ENCODE measurements at regions of chr6 and their contacts with region 1.

Region 1: GRCh38 chr6:28355743-28356665 is 6.3 kb downstream of the ZKSCAN3 start:
- DNase-seq: peak; percentile 74
- ATAC-seq: peak; percentile 88
- H3K4me3 Mint-ChIP-seq: peak overlapping the region; percentile 73
- H3K27ac Mint-ChIP-seq: peak overlapping the region; percentile 97
- H3K4me1 Mint-ChIP-seq: peaks cover 27% of the 10 kb centered on the region
- H3K27me3 Mint-ChIP-seq: no peaks in the 10 kb centered on the region; the same call in 1 of the 2 replicates
- CTCF ChIP-seq: peak; percentile 78

Region 2: DNA sequence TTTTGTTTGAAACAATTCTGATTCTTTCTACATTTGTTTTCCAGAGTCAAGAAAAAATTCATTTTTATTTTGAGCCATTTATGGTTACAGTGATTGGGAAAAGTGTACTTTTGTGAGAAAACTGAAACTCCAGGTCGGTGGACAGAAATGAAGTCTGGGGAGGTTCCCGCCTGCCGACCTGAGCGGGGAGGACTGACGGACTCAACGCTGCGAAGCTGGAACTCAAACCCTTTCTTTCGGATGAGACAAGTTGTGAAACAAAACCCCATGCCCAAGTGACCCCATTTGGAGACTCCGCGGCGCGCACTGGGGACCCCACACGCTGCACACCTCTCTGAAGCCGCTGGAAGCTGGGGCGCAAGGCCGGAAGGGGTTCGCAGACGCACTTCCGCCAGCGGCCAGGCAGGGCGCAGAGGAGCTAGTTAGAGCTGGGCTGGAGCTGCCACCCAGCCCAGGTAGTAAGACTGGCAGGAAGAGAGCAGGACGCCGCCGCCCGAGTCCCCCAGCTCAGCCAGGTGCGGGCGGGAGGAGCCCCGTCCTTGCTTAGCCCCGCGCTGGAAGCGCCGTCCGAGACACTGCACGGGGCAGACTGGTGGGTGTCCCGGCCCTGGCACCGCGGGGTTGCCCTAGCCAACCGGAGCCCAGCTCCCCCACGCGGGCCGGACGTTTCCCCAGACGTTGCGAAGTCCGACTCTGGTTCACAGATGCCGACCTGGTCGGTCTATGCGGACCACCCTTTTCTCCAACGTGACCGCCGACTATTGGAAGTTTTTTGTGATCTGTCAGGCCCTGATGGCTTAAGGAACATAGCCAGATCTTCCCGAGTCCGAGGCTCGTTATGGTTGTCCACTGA is 251.4 kb before region 1 on chr6:
- CTCF ChIA-PET with region 1: interaction called, 21 read pairs
- POLR2A ChIA-PET with region 1: no interaction called
- DNase-seq: peak; percentile 92
- ATAC-seq: peak; percentile 99
- H3K4me3 Mint-ChIP-seq: peak overlapping the region; percentile 78
- H3K27ac Mint-ChIP-seq: peak overlapping the region; percentile 90; the same call in 1 of the 2 replicates
- H3K4me1 Mint-ChIP-seq: peaks cover 5% of the 10 kb centered on the region; the same call in 1 of the 2 replicates
- H3K27me3 Mint-ChIP-seq: peaks cover 58% of the 10 kb centered on the region
- CTCF ChIP-seq: no peak

Region 3: GRCh38 chr6:28161410-28162079 is 194.5 kb before region 1 on chr6:
- CTCF ChIA-PET with region 1: interaction called, 10 read pairs
- POLR2A ChIA-PET with region 1: interaction called, 4 read pairs
- DNase-seq: peak; percentile 93
- ATAC-seq: peak; percentile 99
- H3K4me3 Mint-ChIP-seq: peak overlapping the region; percentile 70
- H3K27ac Mint-ChIP-seq: no peak overlapping the region
- H3K4me1 Mint-ChIP-seq: peaks cover 10% of the 10 kb centered on the region
- H3K27me3 Mint-ChIP-seq: peaks cover 67% of the 10 kb centered on the region
- CTCF ChIP-seq: no peak

Region 4: DNA sequence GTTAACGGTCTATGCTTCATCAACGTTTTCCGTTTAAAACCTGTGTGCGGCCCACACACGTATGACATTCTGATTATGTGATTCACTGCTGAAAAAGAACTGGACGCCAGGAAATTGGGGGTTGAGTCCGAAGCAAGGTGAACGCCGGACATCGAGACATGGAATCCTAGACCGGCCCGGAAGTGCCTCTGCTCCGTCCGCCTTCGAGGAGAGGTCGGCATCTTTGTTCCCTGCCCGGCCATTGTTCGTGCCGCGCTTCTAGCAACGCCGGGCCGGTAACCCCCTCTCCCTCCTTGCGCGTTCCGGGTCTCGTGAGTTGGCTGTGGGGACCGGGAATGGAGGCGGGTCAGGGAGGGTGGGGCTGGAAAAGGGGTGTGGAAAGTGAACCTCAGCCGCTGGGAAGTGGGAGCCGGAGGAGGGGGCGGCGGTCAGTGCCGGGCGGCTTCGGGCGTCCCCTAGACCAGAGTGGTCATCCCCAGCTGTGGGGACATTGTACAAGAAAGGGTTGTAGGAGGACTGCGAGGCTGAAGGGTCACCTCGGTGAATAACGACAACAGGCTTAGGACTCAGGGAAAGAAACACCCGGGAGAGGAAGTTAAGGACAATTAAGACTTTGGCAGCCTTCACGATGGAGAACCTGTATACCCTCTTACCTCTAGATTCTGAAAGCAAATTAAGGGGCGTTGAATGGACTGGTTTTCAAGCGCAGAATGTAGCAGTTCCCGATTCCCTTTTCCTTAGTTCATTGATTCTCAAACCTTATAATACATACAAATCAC is 130.8 kb before region 1 on chr6 and contains the start of gene ZSCAN9:
- CTCF ChIA-PET with region 1: interaction called, 10 read pairs
- POLR2A ChIA-PET with region 1: no interaction called
- DNase-seq: peak; percentile 88
- ATAC-seq: peak; percentile 95
- H3K4me3 Mint-ChIP-seq: peak within 1 kb of the TSS; percentile 94
- H3K27ac Mint-ChIP-seq: peak within 1 kb of the TSS; percentile 53
- H3K4me1 Mint-ChIP-seq: peaks cover 10% of the 10 kb centered on the region
- H3K27me3 Mint-ChIP-seq: peaks cover 45% of the 10 kb centered on the region
- CTCF ChIP-seq: no peak
- total RNA-seq, gene ZSCAN9: 13.0 to 15.1 TPM (median 14.5 TPM) in 3 replicates

Region 5: GRCh38 chr6:28266962-28267694 is 88.9 kb before region 1 on chr6 and contains the start of gene ZSCAN26:
- CTCF ChIA-PET with region 1: interaction called, 34 read pairs
- POLR2A ChIA-PET with region 1: interaction called, 6 read pairs
- DNase-seq: peak; percentile 91
- ATAC-seq: peak; percentile 96
- H3K4me3 Mint-ChIP-seq: no peak within 1 kb of the TSS
- H3K27ac Mint-ChIP-seq: no peak within 1 kb of the TSS; the same call in 1 of the 2 replicates
- H3K4me1 Mint-ChIP-seq: no peaks in the 10 kb centered on the region
- H3K27me3 Mint-ChIP-seq: peaks cover 32% of the 10 kb centered on the region
- CTCF ChIP-seq: no peak
- total RNA-seq, gene ZSCAN26: 5.2 to 7.5 TPM (median 6.6 TPM) in 3 replicates

Region 6: DNA sequence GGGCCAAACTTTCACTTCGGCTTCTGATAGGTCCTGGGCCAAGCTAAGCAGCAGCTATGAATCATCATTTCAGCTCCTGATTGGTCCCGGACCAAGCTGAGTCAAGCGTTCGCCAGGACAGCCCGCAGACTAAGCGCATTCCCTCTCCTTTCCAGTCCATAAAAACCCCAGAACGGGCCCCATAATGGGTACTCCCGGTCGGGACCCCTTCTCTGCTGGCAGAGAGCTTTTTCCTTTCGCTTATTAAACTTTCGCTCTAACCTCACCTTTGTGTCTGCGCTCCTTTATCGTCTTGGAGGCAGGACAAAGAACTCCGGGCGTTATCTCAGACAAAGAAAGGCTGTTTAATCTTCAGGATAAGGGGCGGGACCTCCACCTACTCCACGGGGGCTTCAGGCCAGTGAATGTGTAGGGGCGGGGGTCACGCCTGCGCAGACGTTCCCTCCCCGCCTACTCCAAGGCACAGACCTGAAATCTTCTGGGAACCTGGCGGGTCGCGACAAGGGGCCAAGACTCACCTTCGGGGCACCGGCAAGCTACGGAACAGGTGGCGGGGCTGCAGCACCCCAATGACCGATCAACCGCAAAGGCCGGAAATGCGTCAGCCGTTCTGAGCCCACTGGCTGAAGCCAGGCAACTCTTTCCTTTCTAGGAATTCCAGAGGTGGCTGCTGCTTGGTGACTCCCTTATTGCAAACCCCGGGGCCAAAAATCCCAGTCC is 20.3 kb before region 1 on chr6 and contains the start of gene ZSCAN31:
- CTCF ChIA-PET with region 1: interaction called, 35 read pairs
- POLR2A ChIA-PET with region 1: interaction called, 35 read pairs
- DNase-seq: peak; percentile 87
- ATAC-seq: peak; percentile 96
- H3K4me3 Mint-ChIP-seq: no peak within 1 kb of the TSS
- H3K27ac Mint-ChIP-seq: no peak within 1 kb of the TSS
- H3K4me1 Mint-ChIP-seq: peaks cover 9% of the 10 kb centered on the region
- H3K27me3 Mint-ChIP-seq: peaks cover 11% of the 10 kb centered on the region
- CTCF ChIP-seq: no peak
- total RNA-seq, gene ZSCAN31: 6.6 to 9.1 TPM (median 7.4 TPM) in 3 replicates

Region 7: DNA sequence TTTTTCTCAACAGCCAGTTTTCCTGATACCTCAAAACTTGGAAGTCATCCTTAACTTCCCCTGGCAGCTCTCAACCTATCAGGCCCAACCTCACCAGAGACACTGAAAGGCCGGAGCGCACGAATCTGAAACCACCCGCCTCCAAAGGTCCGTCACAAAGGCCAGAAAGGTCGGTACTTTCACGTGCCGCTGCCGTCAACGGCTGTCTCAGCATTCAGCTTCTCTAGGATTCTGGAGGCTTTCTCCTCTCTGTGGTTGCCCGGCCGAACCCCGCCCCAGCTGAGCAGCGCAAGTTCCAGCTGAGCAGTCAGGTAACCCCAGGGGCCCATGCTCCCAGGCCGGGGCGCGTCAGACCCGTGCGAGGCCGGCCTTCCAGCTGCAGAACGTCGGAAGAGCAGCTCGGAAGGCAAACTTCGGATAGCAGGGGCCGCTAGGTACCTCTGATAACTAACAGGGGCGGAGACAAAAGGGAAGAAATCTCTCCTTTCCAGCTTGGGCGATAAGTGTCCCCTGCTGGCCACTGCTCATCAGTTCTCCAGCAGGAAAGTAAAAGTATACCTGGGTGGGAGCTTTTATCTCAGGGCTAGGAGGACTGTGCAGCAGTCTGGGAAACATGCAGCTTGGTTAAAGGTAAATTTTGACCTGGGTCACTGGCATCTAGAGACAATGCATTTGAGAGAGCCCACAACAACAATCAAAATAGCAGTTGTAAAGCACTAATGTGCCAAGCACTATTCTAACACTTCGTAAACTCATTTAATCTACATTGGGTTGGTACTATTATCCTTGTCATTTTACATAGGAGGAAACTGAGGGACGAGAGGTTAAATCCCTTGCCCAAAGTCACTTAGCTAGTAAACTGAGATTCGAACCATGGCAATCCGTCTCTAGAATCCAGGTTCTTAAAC is 27.5 kb after region 1 on chr6:
- CTCF ChIA-PET with region 1: interaction called, 47 read pairs
- POLR2A ChIA-PET with region 1: interaction called, 10 read pairs
- DNase-seq: peak; percentile 94
- ATAC-seq: peak; percentile 93
- H3K4me3 Mint-ChIP-seq: peak overlapping the region; percentile 76
- H3K27ac Mint-ChIP-seq: peak overlapping the region; percentile 98
- H3K4me1 Mint-ChIP-seq: peaks cover 26% of the 10 kb centered on the region
- H3K27me3 Mint-ChIP-seq: no peaks in the 10 kb centered on the region
- CTCF ChIP-seq: peak; percentile 12; the same call in 1 of the 2 replicates

Measured in WTC11 (cell line).